ENCODE measurements at regions of chr17 and their contacts with region 1.

Region 1: DNA sequence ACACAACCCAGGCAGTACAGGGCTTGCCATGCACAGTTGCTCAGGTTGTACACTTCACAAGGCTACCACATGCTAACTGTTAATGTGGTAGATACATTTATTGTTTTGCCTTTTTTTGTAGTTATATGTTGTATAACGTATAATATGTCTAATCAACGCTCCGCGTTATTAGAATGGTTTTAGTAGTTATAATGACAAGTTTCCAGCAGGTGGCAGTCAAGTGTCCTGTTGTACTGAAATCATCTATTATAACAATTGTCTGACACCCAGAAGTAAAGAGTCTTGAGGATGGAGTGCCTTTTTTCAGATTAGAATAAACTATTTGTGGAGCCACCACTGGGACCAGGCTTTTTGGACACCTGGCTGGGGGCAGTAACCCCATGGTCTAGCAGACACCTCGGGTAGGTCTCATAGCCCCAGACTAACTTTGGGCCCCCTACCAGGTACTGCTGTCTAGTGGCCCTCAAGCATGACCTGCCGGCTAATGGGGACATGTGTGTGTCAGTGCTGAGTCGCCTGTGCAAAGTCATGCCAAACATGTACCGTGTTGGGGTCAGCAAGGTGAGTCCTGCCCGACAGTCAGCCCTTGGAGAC is 32.8 kb downstream of the MYO15A start:
- DNase-seq: peak in 1 of 2 experiments; percentile 30
- H3K4me3 ChIP-seq: no peak overlapping the region
- H3K27ac ChIP-seq: no peak overlapping the region
- H3K4me1 ChIP-seq: peaks cover 5% of the 10 kb centered on the region; the same call in 1 of the 2 replicates
- H3K27me3 ChIP-seq: no peaks in the 10 kb centered on the region
- CTCF ChIP-seq: peak; percentile 79

Region 2: GRCh38 chr17:18108401-18109312 is 32.6 kb before region 1 on chr17 and contains the start of gene MYO15A:
- CTCF ChIA-PET with region 1: no interaction called
- POLR2A ChIA-PET with region 1: no interaction called
- intact Hi-C with region 1: no loop called
- DNase-seq: no peak
- H3K4me3 ChIP-seq: no peak within 1 kb of the TSS
- H3K27ac ChIP-seq: no peak within 1 kb of the TSS
- H3K4me1 ChIP-seq: no peaks in the 10 kb centered on the region
- H3K27me3 ChIP-seq: no peaks in the 10 kb centered on the region
- CTCF ChIP-seq: no peak
- total RNA-seq, gene MYO15A: 3.5 and 4.9 TPM in 2 replicates

Region 3: GRCh38 chr17:18158022-18158600 is 16.8 kb after region 1 on chr17:
- CTCF ChIA-PET with region 1: no interaction called
- POLR2A ChIA-PET with region 1: no interaction called
- intact Hi-C with region 1: no loop called
- DNase-seq: peak; percentile 69 to 96
- H3K4me3 ChIP-seq: peak overlapping the region; percentile 46; the same call in 1 of the 2 replicates
- H3K27ac ChIP-seq: no peak overlapping the region
- H3K4me1 ChIP-seq: 0 out of 2 replicates have a peak, but pooled peaks cover 5% of the 10 kb centered on the region
- H3K27me3 ChIP-seq: no peaks in the 10 kb centered on the region
- CTCF ChIP-seq: no peak

Region 4: GRCh38 chr17:18217412-18218015 is 76.2 kb after region 1 on chr17:
- CTCF ChIA-PET with region 1: interaction called, 3 read pairs
- POLR2A ChIA-PET with region 1: interaction called, 3 read pairs
- intact Hi-C with region 1: loop called (anchors 1 kb)
- DNase-seq: peak in 1 of 2 experiments; percentile 83
- H3K4me3 ChIP-seq: no peak overlapping the region
- H3K27ac ChIP-seq: no peak overlapping the region
- H3K4me1 ChIP-seq: peaks cover 22% of the 10 kb centered on the region
- H3K27me3 ChIP-seq: no peaks in the 10 kb centered on the region
- CTCF ChIP-seq: peak; percentile 98

Region 5: DNA sequence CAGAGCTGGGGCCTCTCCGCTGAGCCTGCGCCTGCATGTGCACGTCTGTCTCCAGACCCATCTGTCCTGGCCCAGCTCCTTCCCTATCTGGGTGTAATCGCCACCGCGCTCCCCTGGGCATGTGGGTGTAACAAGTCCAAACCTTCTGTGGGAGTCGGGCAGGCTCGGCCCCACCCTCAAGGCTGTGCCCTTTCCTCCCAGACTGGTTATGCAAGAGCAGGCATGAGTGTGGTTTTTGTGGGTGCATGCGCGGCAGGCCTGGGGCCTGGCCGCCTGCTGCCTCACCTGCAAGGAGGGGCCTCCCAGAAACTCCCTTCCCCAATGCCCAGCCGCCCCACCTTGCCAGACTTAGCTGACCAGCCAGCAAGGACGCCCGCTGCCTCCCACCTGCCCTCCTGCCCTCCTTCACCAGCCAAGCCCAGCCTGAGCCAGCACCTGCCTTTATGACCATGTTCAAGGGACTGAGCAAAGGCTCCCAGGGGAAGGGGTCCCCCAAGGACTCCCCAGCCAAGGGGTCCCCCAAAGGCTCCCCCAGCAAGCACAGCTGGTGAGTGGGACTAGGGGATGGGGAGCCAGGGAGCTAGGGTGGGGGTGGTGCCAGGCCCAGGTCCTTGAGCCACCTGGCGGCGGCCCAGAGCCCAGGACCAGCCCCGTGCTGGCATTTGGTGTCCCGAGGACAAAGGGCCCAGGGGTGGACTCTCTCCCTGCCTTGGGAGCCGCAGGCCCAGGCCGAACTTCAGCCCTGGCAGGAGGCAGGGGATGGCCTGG is 236.3 kb after region 1 on chr17 and contains the start of gene EVPLL:
- CTCF ChIA-PET with region 1: no interaction called
- POLR2A ChIA-PET with region 1: no interaction called
- intact Hi-C with region 1: no loop called
- DNase-seq: peak; percentile 80 to 96
- H3K4me3 ChIP-seq: no peak within 1 kb of the TSS
- H3K27ac ChIP-seq: no peak within 1 kb of the TSS
- H3K4me1 ChIP-seq: peaks cover 25% of the 10 kb centered on the region
- H3K27me3 ChIP-seq: no peaks in the 10 kb centered on the region
- CTCF ChIP-seq: no peak
- total RNA-seq, gene EVPLL: 3.7 and 5.7 TPM in 2 replicates

Measured in PC-9 (cell line).